ENCODE measurements at regions of chr2 and their contacts with region 1.

Region 1: GRCh38 chr2:230925879-230926765 is 1.1 kb upstream of the GPR55 start:
- DNase-seq: peak in 1 of 35 experiments; percentile 29
- ATAC-seq: no peak
- H3K4me3 ChIP-seq: no peak overlapping the region
- H3K4me3 Mint-ChIP-seq: peak overlapping the region in 1 of 3 donors; percentile 83
- H3K27ac ChIP-seq: peak overlapping the region; percentile 63
- H3K27ac Mint-ChIP-seq: peak overlapping the region; percentile 55 to 92
- H3K4me1 ChIP-seq: peaks cover 0 to 49% of the 10 kb centered on the region in 2 experiments
- H3K4me1 Mint-ChIP-seq: peaks cover 23 to 51% (median 46%) of the 10 kb centered on the region in 3 donors
- H3K27me3 ChIP-seq: peaks cover 0 to 26% of the 10 kb centered on the region in 2 experiments
- H3K27me3 Mint-ChIP-seq: no peaks in the 10 kb centered on the region

Region 2: GRCh38 chr2:230840301-230840700 is 85.8 kb before region 1 on chr2:
- CTCF ChIA-PET with region 1: no interaction called
- POLR2A ChIA-PET with region 1: no interaction called
- DNase-seq: no peak
- ATAC-seq: no peak
- H3K4me3 ChIP-seq: no peak overlapping the region
- H3K4me3 Mint-ChIP-seq: no peak overlapping the region
- H3K27ac ChIP-seq: no peak overlapping the region
- H3K27ac Mint-ChIP-seq: no peak overlapping the region
- H3K4me1 ChIP-seq: no peaks in the 10 kb centered on the region
- H3K4me1 Mint-ChIP-seq: peaks cover 0 to 3% (median 0%) of the 10 kb centered on the region in 3 donors
- H3K27me3 ChIP-seq: peaks cover 0 to 4% of the 10 kb centered on the region in 2 experiments
- H3K27me3 Mint-ChIP-seq: peaks cover 13 to 14% of the 10 kb centered on the region in 2 donors

Region 3: DNA sequence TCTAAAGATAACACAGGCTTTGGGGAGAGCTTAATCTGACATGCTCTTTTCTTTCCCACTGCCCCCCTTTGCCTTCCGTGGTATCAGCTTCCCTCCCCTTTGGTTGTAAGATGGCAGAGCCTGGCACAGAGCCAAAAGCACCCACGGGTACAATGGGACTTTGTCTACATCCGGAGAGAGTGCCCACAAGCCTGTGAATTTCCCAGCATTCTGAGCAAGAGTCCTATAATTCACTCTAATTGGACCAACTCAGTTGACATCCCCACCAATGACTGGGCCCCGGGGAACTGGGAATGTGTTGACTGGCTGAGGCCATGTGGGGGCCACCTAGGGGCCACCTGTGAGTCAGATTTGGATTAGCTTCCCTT is 91.1 kb after region 1 on chr2:
- CTCF ChIA-PET with region 1: no interaction called
- POLR2A ChIA-PET with region 1: interaction called in 1 of 2 experiments, 10 read pairs
- DNase-seq: peak in 3 of 35 experiments; percentile 6 to 23 (median 11)
- ATAC-seq: no peak
- H3K4me3 ChIP-seq: no peak overlapping the region
- H3K4me3 Mint-ChIP-seq: no peak overlapping the region
- H3K27ac ChIP-seq: no peak overlapping the region
- H3K27ac Mint-ChIP-seq: no peak overlapping the region
- H3K4me1 ChIP-seq: no peaks in the 10 kb centered on the region
- H3K4me1 Mint-ChIP-seq: no peaks in the 10 kb centered on the region
- H3K27me3 ChIP-seq: peaks cover 2 to 27% of the 10 kb centered on the region in 2 experiments
- H3K27me3 Mint-ChIP-seq: peaks cover 12 to 25% of the 10 kb centered on the region in 2 donors

Region 4: DNA sequence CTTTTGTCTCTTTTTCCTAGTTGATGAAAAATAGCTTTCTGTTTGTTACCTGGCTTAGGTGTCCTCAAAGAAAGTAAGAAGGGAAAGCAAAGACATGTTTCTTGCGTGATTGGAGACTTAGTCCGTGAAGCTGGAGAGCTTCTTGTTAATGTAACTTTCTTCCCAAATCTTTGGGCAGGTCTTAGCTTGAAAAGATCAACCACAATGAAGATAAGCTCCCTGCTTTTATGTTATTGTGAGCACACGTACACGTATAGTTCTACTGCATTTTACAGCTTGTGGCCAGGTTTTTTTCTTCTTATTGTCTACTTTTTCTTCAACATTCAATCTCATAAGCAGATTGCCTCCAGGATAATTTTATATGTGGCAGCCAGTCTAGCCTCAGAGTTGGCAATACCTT is 1135.1 kb after region 1 on chr2:
- CTCF ChIA-PET with region 1: no interaction called
- POLR2A ChIA-PET with region 1: no interaction called
- DNase-seq: no peak
- ATAC-seq: no peak
- H3K4me3 ChIP-seq: no peak overlapping the region
- H3K4me3 Mint-ChIP-seq: no peak overlapping the region
- H3K27ac ChIP-seq: no peak overlapping the region
- H3K27ac Mint-ChIP-seq: no peak overlapping the region
- H3K4me1 ChIP-seq: peaks cover 0 to 2% of the 10 kb centered on the region in 2 experiments
- H3K4me1 Mint-ChIP-seq: peaks cover 51 to 57% (median 52%) of the 10 kb centered on the region in 3 donors
- H3K27me3 ChIP-seq: no peaks in the 10 kb centered on the region
- H3K27me3 Mint-ChIP-seq: no peaks in the 10 kb centered on the region

Measured in T-cell (primary cell).